ENCODE measurements at regions of chr2 and their contacts with region 1.

Region 1: GRCh38 chr2:73233154-73233931 is at the start of gene PRADC1:
- DNase-seq: peak; percentile 84 to 98 (median 90)
- ATAC-seq: peak; percentile 77
- H3K4me3 ChIP-seq: peak within 1 kb of the TSS; percentile 98
- H3K4me3 Mint-ChIP-seq: peak within 1 kb of the TSS; percentile 96
- H3K27ac ChIP-seq: peak within 1 kb of the TSS; percentile 82 to 90
- H3K27ac Mint-ChIP-seq: peak within 1 kb of the TSS; percentile 98
- H3K4me1 ChIP-seq: peaks cover 39% of the 10 kb centered on the region
- H3K4me1 Mint-ChIP-seq: peaks cover 50% of the 10 kb centered on the region
- H3K27me3 ChIP-seq: no peaks in the 10 kb centered on the region
- H3K27me3 Mint-ChIP-seq: no peaks in the 10 kb centered on the region
- CTCF ChIP-seq: no peak
- total RNA-seq, gene PRADC1: 2.9 to 3.0 TPM

Region 2: GRCh38 chr2:73071360-73072133 is 161.8 kb before region 1 on chr2 and contains the start of gene SFXN5:
- CTCF ChIA-PET with region 1: no interaction called
- POLR2A ChIA-PET with region 1: interaction called, 9 read pairs
- intact Hi-C with region 1: loop called (anchors 5 kb)
- DNase-seq: peak; percentile 87 to 96 (median 92)
- ATAC-seq: peak; percentile 84
- H3K4me3 ChIP-seq: peak within 1 kb of the TSS; percentile 84
- H3K4me3 Mint-ChIP-seq: peak within 1 kb of the TSS; percentile 99
- H3K27ac ChIP-seq: peak within 1 kb of the TSS; percentile 81 to 86
- H3K27ac Mint-ChIP-seq: peak within 1 kb of the TSS; percentile 91
- H3K4me1 ChIP-seq: peaks cover 21% of the 10 kb centered on the region
- H3K4me1 Mint-ChIP-seq: peaks cover 31% of the 10 kb centered on the region
- H3K27me3 ChIP-seq: no peaks in the 10 kb centered on the region
- H3K27me3 Mint-ChIP-seq: no peaks in the 10 kb centered on the region
- CTCF ChIP-seq: no peak
- total RNA-seq, gene SFXN5: 5.1 to 5.4 TPM

Region 3: DNA sequence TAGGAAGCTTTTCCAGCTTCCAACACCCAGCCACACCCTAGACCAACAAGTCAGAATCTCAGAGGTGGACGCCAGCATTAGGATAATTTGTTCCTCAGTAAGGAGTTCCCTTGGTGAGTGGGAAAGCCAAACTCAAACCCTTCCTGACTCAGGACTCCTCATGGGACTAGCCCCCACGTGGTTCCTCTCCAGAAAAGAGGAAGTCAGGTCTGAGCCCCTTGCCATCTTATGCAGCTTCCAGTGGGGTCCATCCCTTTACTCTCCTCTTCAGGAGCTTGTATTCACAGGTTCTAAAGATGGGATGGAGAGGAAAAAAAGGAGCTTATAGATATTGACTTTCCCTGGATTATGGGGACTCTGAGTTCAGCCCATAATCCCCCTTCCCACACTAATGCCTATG is 45.8 kb before region 1 on chr2:
- CTCF ChIA-PET with region 1: no interaction called
- POLR2A ChIA-PET with region 1: no interaction called
- intact Hi-C with region 1: no loop called
- DNase-seq: no peak
- ATAC-seq: no peak
- H3K4me3 ChIP-seq: no peak overlapping the region
- H3K4me3 Mint-ChIP-seq: no peak overlapping the region
- H3K27ac ChIP-seq: no peak overlapping the region
- H3K27ac Mint-ChIP-seq: no peak overlapping the region
- H3K4me1 ChIP-seq: no peaks in the 10 kb centered on the region
- H3K4me1 Mint-ChIP-seq: no peaks in the 10 kb centered on the region
- H3K27me3 ChIP-seq: no peaks in the 10 kb centered on the region
- H3K27me3 Mint-ChIP-seq: peaks cover 32% of the 10 kb centered on the region
- CTCF ChIP-seq: no peak

Region 4: GRCh38 chr2:73212448-73213176 is 20.7 kb before region 1 on chr2:
- CTCF ChIA-PET with region 1: interaction called, 24 read pairs
- POLR2A ChIA-PET with region 1: interaction called, 22 read pairs
- intact Hi-C with region 1: loop called (anchors 1 kb)
- DNase-seq: peak; percentile 56 to 86 (median 64)
- ATAC-seq: peak; percentile 59
- H3K4me3 ChIP-seq: no peak overlapping the region
- H3K4me3 Mint-ChIP-seq: peak overlapping the region; percentile 84
- H3K27ac ChIP-seq: no peak overlapping the region
- H3K27ac Mint-ChIP-seq: peak overlapping the region; percentile 81
- H3K4me1 ChIP-seq: peaks cover 32% of the 10 kb centered on the region
- H3K4me1 Mint-ChIP-seq: peaks cover 37% of the 10 kb centered on the region
- H3K27me3 ChIP-seq: no peaks in the 10 kb centered on the region
- H3K27me3 Mint-ChIP-seq: peaks cover 23% of the 10 kb centered on the region
- CTCF ChIP-seq: peak; percentile 85

Region 5: DNA sequence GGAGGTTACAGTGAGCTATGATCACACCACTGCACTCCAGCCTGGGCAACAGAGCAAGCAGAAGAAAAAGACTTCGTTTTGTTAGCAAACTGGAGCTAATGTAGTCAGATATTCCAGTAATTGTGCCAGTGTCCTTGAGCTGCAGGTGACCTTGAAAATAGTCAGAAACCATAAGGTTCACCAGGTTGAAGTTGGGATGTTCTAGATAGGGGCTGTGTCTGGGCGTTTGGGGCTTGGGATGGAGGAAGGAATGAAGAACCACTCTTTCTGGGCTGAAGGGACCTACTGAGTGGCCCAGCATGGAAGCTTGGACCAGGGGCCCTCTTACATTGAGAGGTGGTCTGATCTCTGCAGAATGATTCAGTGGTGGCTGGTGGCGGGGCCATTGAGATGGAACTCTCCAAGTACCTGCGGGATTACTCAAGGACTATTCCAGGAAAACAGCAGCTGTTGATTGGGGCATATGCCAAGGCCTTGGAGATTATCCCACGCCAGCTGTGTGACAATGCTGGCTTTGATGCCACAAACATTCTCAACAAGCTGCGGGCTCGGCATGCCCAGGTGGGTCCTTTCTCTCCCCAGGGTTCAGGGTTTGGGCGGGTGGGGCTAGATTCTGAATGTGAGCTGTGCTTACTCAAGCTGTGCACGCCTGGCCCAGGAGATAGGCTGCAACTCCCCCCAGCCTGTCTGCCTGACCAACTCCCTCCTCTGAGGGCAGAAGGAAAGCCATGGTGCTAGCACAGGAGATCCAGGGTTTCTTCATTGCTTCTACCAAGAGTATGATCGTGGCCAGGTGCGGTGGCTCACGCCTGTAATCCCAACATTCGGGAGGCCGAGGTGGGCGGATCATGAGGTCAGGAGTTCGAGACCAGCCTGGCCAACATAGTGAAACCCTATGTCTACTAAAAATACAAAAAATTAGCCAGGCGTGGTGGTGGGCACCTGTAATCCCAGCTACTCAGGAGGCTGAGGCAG is 17.8 kb after region 1 on chr2:
- CTCF ChIA-PET with region 1: no interaction called
- POLR2A ChIA-PET with region 1: interaction called, 11 read pairs
- intact Hi-C with region 1: no loop called
- DNase-seq: no peak
- ATAC-seq: no peak
- H3K4me3 ChIP-seq: no peak overlapping the region
- H3K4me3 Mint-ChIP-seq: no peak overlapping the region
- H3K27ac ChIP-seq: no peak overlapping the region
- H3K27ac Mint-ChIP-seq: no peak overlapping the region
- H3K4me1 ChIP-seq: no peaks in the 10 kb centered on the region
- H3K4me1 Mint-ChIP-seq: peaks cover 2% of the 10 kb centered on the region
- H3K27me3 ChIP-seq: no peaks in the 10 kb centered on the region
- H3K27me3 Mint-ChIP-seq: no peaks in the 10 kb centered on the region
- CTCF ChIP-seq: no peak

Region 6: DNA sequence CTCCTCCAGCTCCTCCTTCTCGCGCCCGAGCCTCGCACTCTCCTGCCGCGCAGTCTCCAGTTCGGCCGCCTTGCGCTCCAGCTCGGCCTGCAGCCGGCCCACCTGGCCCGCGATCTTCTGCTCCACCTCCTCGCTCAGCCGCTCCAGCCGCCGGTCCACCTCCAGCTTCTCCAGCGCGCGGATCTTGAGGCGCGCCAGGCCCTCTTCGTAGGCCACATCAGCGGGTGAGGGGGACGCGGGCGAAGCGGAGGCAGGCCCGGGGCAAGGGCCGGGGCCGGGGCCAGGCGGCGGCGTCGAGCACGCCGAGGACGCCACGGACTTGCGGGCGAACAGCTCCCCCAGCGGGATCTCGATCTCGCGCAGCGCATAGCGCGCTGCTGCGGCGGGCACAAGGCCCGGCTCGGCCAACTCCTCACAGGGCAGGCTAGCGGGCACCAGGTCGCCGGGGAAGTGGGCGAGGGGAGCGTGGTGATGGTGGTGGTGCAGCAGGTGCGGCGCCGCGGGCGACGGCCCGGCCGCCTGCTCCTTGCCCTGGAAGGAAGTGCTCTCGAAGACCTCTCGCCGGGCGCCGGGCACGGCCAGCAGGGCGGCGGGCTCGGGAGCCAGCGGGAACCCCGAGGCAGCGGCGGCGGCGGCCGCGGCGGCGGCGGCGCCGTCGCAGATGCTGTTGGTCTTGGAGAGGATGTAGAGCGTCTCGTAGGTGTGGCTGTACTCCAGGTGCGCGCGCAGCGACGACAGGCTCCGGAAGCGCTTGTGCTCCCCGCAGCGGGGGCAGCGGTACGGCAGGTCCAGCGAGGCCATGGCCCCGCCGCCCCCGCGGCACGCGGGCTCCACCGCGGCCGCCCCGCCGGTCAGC is 35.7 kb after region 1 on chr2:
- CTCF ChIA-PET with region 1: interaction called, 4 read pairs
- POLR2A ChIA-PET with region 1: interaction called, 17 read pairs
- intact Hi-C with region 1: loop called (anchors 1 to 2 kb)
- DNase-seq: peak; percentile 57 to 92 (median 80)
- ATAC-seq: peak; percentile 96
- H3K4me3 ChIP-seq: peak overlapping the region; percentile 58
- H3K4me3 Mint-ChIP-seq: peak overlapping the region; percentile 83
- H3K27ac ChIP-seq: no peak overlapping the region
- H3K27ac Mint-ChIP-seq: peak overlapping the region; percentile 75
- H3K4me1 ChIP-seq: peaks cover 10% of the 10 kb centered on the region
- H3K4me1 Mint-ChIP-seq: peaks cover 28% of the 10 kb centered on the region
- H3K27me3 ChIP-seq: no peaks in the 10 kb centered on the region
- H3K27me3 Mint-ChIP-seq: no peaks in the 10 kb centered on the region
- CTCF ChIP-seq: peak; percentile 13

Region 7: GRCh38 chr2:73293534-73294171 is 60.3 kb after region 1 on chr2 and contains the start of gene EGR4:
- CTCF ChIA-PET with region 1: interaction called, 14 read pairs
- POLR2A ChIA-PET with region 1: interaction called, 46 read pairs
- intact Hi-C with region 1: loop called in 1 of 2 experiments (anchors 5 kb)
- DNase-seq: peak; percentile 78 to 96 (median 84)
- ATAC-seq: peak; percentile 94
- H3K4me3 ChIP-seq: peak within 1 kb of the TSS; percentile 48
- H3K4me3 Mint-ChIP-seq: peak within 1 kb of the TSS; percentile 82
- H3K27ac ChIP-seq: no peak within 1 kb of the TSS
- H3K27ac Mint-ChIP-seq: no peak within 1 kb of the TSS
- H3K4me1 ChIP-seq: peaks cover 30% of the 10 kb centered on the region
- H3K4me1 Mint-ChIP-seq: peaks cover 21% of the 10 kb centered on the region
- H3K27me3 ChIP-seq: peaks cover 61 to 79% of the 10 kb centered on the region in 2 experiments
- H3K27me3 Mint-ChIP-seq: peaks cover 91% of the 10 kb centered on the region
- CTCF ChIP-seq: no peak
- total RNA-seq, gene EGR4: 0.14 to 0.17 TPM

Region 8: DNA sequence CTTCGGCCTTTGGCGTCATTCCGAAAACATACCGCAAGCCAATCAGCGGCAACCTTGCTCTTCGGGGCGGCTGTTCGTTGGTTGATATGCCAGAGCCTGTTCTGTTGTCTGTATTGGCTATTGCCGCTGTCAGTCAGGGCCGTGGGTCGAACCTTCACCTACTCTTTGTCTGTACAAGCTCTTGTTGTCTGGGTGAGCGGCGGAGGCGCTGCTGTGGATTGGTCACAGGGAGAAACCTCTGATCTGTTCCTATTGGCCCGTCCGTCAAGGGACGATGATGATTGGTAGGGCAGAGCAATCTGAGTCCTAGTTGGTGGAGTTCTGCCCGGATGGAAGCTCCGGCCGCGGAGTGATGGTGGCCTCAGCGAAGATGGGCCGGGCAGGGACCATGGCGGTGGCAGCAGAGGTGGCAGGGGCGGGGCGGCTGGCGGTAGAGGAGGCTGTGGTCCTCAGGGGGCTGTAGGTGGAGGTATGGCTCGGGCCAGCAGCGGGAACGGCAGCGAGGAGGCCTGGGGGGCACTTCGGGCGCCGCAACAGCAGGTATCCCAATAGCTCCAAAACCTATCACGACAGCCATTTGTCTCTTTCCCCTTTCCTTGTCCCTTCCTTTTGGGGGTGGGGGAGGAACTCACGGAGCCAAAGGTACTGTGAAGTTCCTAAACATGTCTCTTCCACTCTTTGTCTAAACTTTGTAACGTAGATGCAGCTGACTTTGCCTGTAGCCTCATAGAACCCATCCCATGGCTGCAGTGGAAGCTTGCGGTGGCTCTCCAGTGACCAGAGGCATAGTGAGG is 1225.0 kb after region 1 on chr2 and contains the start of gene WBP1:
- CTCF ChIA-PET with region 1: no interaction called
- POLR2A ChIA-PET with region 1: interaction called, 10 read pairs
- intact Hi-C with region 1: loop called (anchors 10 kb)
- DNase-seq: peak; percentile 96 to 100 (median 98)
- ATAC-seq: peak; percentile 80
- H3K4me3 ChIP-seq: peak within 1 kb of the TSS; percentile 96
- H3K4me3 Mint-ChIP-seq: peak within 1 kb of the TSS; percentile 95
- H3K27ac ChIP-seq: peak within 1 kb of the TSS; percentile 100
- H3K27ac Mint-ChIP-seq: peak within 1 kb of the TSS; percentile 98
- H3K4me1 ChIP-seq: peaks cover 44% of the 10 kb centered on the region
- H3K4me1 Mint-ChIP-seq: peaks cover 64% of the 10 kb centered on the region
- H3K27me3 ChIP-seq: no peaks in the 10 kb centered on the region
- H3K27me3 Mint-ChIP-seq: no peaks in the 10 kb centered on the region
- CTCF ChIP-seq: no peak
- total RNA-seq, gene WBP1: 79.1 to 80.5 TPM